ENCODE measurements at regions of chr6 and their contacts with region 1.

Region 1: GRCh38 chr6:83221889-83222479 is 28.8 kb downstream of the RWDD2A start:
- DNase-seq: no peak

Region 2: GRCh38 chr6:83160167-83160566 is 61.8 kb before region 1 on chr6:
- intact Hi-C with region 1: no loop called
- DNase-seq: no peak

Region 3: DNA sequence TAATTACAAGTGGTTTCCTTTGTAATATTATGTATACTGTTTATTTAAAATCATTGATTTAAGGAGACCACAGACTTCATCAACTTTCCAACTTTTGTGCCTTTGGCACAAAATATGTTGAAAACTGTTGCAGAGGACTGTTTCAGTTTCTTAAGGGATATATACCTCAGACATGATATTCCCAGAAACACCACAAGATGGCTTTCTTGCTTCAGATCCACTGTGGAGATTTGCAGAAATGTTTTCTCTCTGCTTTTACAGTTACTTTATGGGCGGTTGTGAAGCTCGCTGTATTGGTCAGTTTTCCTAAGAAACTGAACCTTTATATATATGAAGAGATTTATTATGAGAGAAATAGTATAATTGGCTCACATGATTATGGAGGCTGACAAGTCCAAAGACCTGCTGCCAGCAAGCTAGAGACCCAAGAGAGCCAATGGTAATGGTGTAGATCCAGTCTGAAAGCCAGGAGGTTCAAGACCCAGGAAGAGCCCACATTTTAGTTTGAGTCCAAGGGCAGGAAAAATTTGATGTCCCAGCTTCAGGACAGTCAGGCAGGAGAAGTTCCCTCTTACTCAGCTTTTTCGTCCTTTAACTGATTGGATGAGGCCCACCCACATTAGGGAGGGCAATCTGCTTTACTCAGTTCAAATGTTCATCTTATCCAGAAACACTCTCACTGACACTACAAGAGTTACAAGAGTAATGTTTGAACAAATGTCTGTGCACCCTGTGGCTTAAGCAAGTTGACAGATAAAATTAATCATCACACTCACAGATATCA is 196.1 kb after region 1 on chr6:
- intact Hi-C with region 1: loop called (anchors 5 kb)
- DNase-seq: no peak

Region 4: DNA sequence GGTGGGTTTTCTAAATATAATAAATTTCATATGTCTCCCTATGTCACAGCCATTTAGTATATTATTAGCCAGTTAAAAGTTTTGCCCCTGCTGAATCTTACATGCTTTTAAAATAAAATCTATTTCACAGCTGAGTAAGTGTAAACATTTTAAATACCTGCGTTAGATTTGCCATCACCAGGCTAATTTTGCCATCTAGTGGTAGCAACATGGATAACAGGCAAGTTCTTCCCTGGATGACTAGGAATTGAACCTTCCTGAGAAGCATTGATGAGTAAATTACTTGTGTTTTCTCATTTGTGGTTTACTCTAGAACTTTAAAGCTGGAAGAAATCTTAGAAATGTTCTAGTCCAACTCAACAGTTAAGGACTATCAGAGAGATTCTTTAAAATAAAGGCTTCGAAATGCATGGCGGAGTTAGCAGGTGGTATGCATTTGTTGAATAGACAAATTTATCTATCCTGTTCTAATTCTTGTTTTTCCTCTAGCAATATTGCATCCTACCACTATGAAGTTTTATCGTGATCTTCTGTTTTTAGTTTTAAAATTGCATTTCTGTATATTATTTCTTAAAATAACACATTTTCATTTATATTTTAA is 293.0 kb after region 1 on chr6:
- intact Hi-C with region 1: loop called (anchors 1 kb)
- DNase-seq: peak in 2 of 10 donors; percentile 15 to 31

Region 5: DNA sequence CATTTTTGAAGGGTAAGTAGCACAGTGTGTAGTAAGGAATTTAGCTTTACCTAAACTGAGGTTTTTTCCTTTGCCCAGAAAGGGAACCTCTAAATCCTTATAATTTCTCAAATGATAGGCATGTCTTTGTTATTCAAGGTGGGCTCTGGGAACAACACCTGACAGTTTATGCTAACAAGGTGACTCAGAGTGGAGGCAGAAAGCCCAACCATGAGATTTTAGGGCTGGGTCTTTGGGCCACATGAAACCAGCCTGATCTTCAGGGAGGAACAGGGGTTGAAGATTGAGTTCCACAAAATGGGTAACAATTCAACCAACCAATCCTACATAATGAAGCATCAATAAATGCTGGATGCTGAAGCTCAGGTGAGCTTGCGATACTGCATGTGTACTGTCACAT is 337.0 kb after region 1 on chr6:
- intact Hi-C with region 1: no loop called
- DNase-seq: no peak